GM12878 (cell line): ENCODE measurements at regions of chr2 and their contacts with region 1.

Region 1: DNA sequence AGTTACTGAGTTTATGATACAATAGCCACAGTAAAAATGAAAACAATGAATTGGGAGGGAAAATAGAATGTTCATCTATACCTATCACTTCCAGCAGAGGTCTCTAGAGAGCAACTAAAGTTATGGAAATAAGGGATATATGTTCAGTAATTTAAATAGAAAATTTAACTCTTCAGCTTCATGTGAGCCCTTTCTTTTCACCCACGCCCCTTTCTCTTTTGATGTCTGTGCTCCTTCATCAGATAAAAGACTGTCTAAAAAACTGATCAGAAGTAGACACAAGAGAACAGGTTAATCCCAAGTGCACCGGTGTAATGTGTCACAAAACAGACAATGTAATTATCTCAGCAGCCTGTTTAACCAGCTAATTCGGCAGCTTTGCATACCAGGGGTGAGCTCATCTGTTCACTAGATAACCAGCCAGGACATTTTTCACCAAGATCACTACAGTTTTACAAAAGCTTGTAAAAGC is 238.5 kb upstream of the ERBB4 start:
- DNase-seq: peak; percentile 17
- ATAC-seq: peak; percentile 74
- H3K4me3 ChIP-seq: no peak overlapping the region
- H3K27ac ChIP-seq: no peak overlapping the region
- H3K4me1 ChIP-seq: no peaks in the 10 kb centered on the region
- H3K27me3 ChIP-seq: no peaks in the 10 kb centered on the region
- CTCF ChIP-seq: peak; percentile 47 to 63 (median 53)
- EP300 ChIP-seq: no peak
- POLR2A ChIP-seq: no peak
- RAD21 ChIP-seq: peak; percentile 69

Region 2: DNA sequence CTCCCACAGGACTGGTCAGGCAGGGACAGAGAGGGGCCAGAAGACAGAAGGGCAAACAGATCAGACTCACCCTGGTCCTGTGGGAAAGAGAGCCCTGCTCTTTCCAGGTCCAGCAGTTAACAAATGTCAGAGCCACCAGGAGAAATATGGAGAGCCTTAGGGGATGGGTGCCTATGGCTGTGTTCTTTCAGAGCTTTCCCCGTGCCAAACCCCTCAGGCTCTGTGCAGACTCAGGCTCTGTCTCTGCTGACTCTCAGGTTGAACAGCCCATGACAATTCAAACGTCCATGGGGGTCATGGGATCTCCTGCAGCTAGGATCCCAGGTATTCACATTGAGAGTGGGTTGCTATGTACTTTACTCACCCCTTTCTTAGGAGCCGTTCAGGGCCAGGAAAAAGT is 117.6 kb before region 1 on chr2:
- CTCF ChIA-PET with region 1: no interaction called
- POLR2A ChIA-PET with region 1: no interaction called
- RAD21 ChIA-PET with region 1: no interaction called
- SMC1A ChIA-PET with region 1: no interaction called
- in situ Hi-C with region 1: no loop called
- intact Hi-C with region 1: no loop called
- DNase-seq: no peak
- ATAC-seq: no peak
- H3K4me3 ChIP-seq: no peak overlapping the region
- H3K27ac ChIP-seq: no peak overlapping the region
- H3K4me1 ChIP-seq: no peaks in the 10 kb centered on the region
- H3K27me3 ChIP-seq: no peaks in the 10 kb centered on the region; a peak in 1 of 4 replicates
- CTCF ChIP-seq: no peak
- EP300 ChIP-seq: no peak
- POLR2A ChIP-seq: no peak
- RAD21 ChIP-seq: no peak

Region 3: GRCh38 chr2:212831671-212832199 is 54.7 kb after region 1 on chr2:
- CTCF ChIA-PET with region 1: no interaction called
- POLR2A ChIA-PET with region 1: no interaction called
- RAD21 ChIA-PET with region 1: no interaction called
- SMC1A ChIA-PET with region 1: no interaction called
- in situ Hi-C with region 1: no loop called
- intact Hi-C with region 1: no loop called
- DNase-seq: no peak
- ATAC-seq: no peak
- H3K4me3 ChIP-seq: no peak overlapping the region
- H3K27ac ChIP-seq: no peak overlapping the region
- H3K4me1 ChIP-seq: no peaks in the 10 kb centered on the region
- H3K27me3 ChIP-seq: no peaks in the 10 kb centered on the region
- CTCF ChIP-seq: no peak
- EP300 ChIP-seq: no peak
- POLR2A ChIP-seq: no peak
- RAD21 ChIP-seq: no peak

Region 4: DNA sequence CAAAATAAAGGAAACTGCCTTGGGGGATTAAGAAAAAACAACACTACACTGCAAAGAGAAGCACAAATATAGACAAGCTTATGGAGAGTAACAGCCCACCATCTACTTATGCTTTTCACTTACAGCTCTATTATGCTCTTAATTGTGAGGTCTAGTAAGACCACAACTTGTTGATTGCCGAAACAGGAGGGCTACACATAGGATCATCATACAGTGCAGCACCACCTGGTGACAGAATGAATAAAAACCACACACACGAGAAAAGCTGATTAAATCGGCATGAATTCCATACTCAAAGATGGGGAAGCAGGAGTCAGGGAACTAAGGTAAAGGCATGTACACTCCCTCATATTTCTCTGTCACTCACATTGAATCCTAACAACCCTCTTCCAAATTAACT is 115.1 kb after region 1 on chr2:
- CTCF ChIA-PET with region 1: interaction called, 21 read pairs
- POLR2A ChIA-PET with region 1: no interaction called
- RAD21 ChIA-PET with region 1: interaction called, 8 read pairs
- SMC1A ChIA-PET with region 1: interaction called, 8 read pairs
- in situ Hi-C with region 1: no loop called
- intact Hi-C with region 1: loop called (anchors 5 kb)
- DNase-seq: no peak
- ATAC-seq: peak; percentile 68
- H3K4me3 ChIP-seq: no peak overlapping the region
- H3K27ac ChIP-seq: no peak overlapping the region
- H3K4me1 ChIP-seq: no peaks in the 10 kb centered on the region
- H3K27me3 ChIP-seq: no peaks in the 10 kb centered on the region
- CTCF ChIP-seq: peak in 2 of 3 experiments; percentile 6 to 34; a peak in 2 of 6 replicates
- EP300 ChIP-seq: no peak
- POLR2A ChIP-seq: no peak
- RAD21 ChIP-seq: no peak

Region 5: DNA sequence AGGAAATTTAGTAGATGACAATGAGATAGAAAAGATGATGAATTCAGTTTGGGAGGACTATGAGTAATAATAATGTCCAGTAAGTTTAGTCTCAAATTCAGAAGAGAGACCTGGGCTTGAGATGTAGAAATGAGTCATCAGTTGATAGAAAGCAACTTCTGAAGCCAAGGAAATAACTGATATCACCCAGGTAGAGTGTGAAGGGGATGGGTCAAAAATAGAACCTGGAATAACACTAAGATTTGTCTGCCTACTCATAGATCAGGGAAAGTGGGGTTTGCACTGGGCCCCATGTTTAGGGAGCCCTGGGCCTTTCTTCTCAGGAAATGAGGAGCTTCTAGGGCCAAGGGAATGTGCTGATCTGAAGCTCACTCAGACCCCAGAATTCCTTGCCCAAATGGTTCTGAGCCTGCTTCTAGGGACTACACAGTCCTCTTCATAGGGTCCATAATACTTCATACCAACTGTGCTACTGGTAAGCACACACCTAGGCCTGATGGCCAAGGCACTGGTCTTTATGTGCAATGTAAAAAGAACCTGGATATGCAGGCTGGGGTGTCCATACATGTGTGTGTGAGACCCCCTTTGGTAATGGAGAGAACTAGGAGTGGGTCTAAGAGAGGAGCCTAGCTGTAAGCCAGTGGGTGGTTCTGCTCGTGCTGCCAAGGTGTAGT is 233.2 kb after region 1 on chr2:
- CTCF ChIA-PET with region 1: interaction called, 7 read pairs
- POLR2A ChIA-PET with region 1: no interaction called
- RAD21 ChIA-PET with region 1: interaction called, 4 read pairs
- SMC1A ChIA-PET with region 1: interaction called, 11 read pairs
- in situ Hi-C with region 1: no loop called
- intact Hi-C with region 1: loop called (anchors 5 kb)
- DNase-seq: no peak
- ATAC-seq: peak; percentile 35
- H3K4me3 ChIP-seq: no peak overlapping the region
- H3K27ac ChIP-seq: peak overlapping the region; percentile 16
- H3K4me1 ChIP-seq: peaks cover 20% of the 10 kb centered on the region
- H3K27me3 ChIP-seq: no peaks in the 10 kb centered on the region
- CTCF ChIP-seq: no peak
- EP300 ChIP-seq: no peak
- POLR2A ChIP-seq: peak; percentile 58; the same call in 1 of the 2 replicates
- RAD21 ChIP-seq: no peak

Region 6: GRCh38 chr2:213199864-213200263 is 422.8 kb after region 1 on chr2:
- CTCF ChIA-PET with region 1: no interaction called
- POLR2A ChIA-PET with region 1: no interaction called
- RAD21 ChIA-PET with region 1: no interaction called
- SMC1A ChIA-PET with region 1: no interaction called
- in situ Hi-C with region 1: no loop called
- intact Hi-C with region 1: no loop called
- DNase-seq: no peak
- ATAC-seq: no peak
- H3K4me3 ChIP-seq: no peak overlapping the region
- H3K27ac ChIP-seq: no peak overlapping the region
- H3K4me1 ChIP-seq: no peaks in the 10 kb centered on the region
- H3K27me3 ChIP-seq: no peaks in the 10 kb centered on the region
- CTCF ChIP-seq: no peak
- EP300 ChIP-seq: no peak
- POLR2A ChIP-seq: no peak
- RAD21 ChIP-seq: no peak